ENCODE measurements at regions of chr12 and their contacts with region 1.

Region 1: DNA sequence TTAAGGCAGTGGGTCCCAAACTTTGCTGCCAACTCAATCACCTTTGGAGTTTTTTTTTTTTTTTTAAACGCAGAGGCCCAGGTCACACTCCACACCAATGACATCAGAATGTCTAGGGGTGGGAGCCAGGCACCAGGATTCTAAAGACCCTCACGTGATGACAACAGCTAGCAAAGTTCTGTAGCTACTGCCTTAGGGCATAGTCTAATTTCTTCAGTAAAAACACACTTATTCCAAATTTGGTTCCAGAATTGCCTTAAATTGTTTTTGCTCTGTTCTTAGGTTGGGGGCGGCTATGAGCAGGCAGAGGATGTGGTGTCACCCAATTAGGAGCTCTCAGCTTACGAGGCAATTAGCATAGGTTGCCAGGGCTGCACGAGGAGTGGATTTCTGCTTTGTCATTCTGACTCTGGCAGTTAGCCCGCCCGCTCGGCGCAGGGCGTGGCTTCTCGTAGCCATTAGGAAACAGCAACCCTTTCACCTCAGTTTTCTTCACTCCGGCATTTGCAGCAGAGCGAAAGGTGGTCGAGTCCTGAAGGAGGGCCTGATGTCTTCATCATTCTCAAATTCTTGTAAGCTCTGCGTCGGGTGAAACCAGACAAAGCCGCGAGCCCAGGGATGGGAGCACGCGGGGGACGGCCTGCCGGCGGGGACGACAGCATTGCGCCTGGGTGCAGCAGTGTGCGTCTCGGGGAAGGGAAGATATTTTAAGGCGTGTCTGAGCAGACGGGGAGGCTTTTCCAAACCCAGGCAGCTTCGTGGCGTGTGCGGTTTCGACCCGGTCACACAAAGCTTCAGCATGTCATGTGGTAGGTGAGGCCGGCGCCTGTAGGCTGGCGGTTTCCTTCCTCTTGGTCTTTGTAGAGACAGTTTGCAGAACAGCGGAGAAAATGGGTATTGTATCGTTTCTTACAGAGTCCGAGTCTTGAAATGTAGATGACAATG is 16.7 kb upstream of the EID3 start:
- DNase-seq: peak; percentile 99
- H3K4me3 Mint-ChIP-seq: peak overlapping the region; percentile 98
- H3K27ac Mint-ChIP-seq: peak overlapping the region; percentile 100
- H3K4me1 Mint-ChIP-seq: peaks cover 14% of the 10 kb centered on the region
- H3K27me3 Mint-ChIP-seq: no peaks in the 10 kb centered on the region
- CTCF ChIP-seq: no peak

Region 2: GRCh38 chr12:103930034-103930786 is 356.6 kb before region 1 on chr12 and contains the start of gene HSP90B1:
- CTCF ChIA-PET with region 1: no interaction called
- POLR2A ChIA-PET with region 1: interaction called, 12 read pairs
- intact Hi-C with region 1: no loop called
- DNase-seq: peak; percentile 100
- H3K4me3 Mint-ChIP-seq: peak within 1 kb of the TSS; percentile 75
- H3K27ac Mint-ChIP-seq: peak within 1 kb of the TSS; percentile 58
- H3K4me1 Mint-ChIP-seq: peaks cover 23% of the 10 kb centered on the region
- H3K27me3 Mint-ChIP-seq: no peaks in the 10 kb centered on the region
- CTCF ChIP-seq: no peak
- total RNA-seq, gene HSP90B1: 1,052 and 1,334 TPM in 2 replicates

Region 3: GRCh38 chr12:104177663-104178501 is 108.9 kb before region 1 on chr12:
- CTCF ChIA-PET with region 1: interaction called, 8 read pairs
- POLR2A ChIA-PET with region 1: interaction called, 32 read pairs
- intact Hi-C with region 1: no loop called
- DNase-seq: peak; percentile 96
- H3K4me3 Mint-ChIP-seq: peak overlapping the region; percentile 52
- H3K27ac Mint-ChIP-seq: peak overlapping the region; percentile 89
- H3K4me1 Mint-ChIP-seq: peaks cover 50% of the 10 kb centered on the region
- H3K27me3 Mint-ChIP-seq: no peaks in the 10 kb centered on the region
- CTCF ChIP-seq: peak; percentile 56

Region 4: GRCh38 chr12:104215638-104216297 is 71.0 kb before region 1 on chr12 and contains the start of gene TXNRD1:
- CTCF ChIA-PET with region 1: interaction called, 19 read pairs
- POLR2A ChIA-PET with region 1: interaction called, 417 read pairs
- intact Hi-C with region 1: loop called (anchors 1 kb)
- DNase-seq: no peak
- H3K4me3 Mint-ChIP-seq: no peak within 1 kb of the TSS
- H3K27ac Mint-ChIP-seq: peak within 1 kb of the TSS; percentile 6
- H3K4me1 Mint-ChIP-seq: peaks cover 20% of the 10 kb centered on the region
- H3K27me3 Mint-ChIP-seq: no peaks in the 10 kb centered on the region
- CTCF ChIP-seq: no peak
- total RNA-seq, gene TXNRD1: 64.0 and 82.8 TPM in 2 replicates

Region 5: GRCh38 chr12:104263580-104264358 is 23.0 kb before region 1 on chr12:
- CTCF ChIA-PET with region 1: interaction called, 8 read pairs
- POLR2A ChIA-PET with region 1: interaction called, 89 read pairs
- intact Hi-C with region 1: no loop called
- DNase-seq: peak; percentile 77
- H3K4me3 Mint-ChIP-seq: no peak overlapping the region
- H3K27ac Mint-ChIP-seq: peak overlapping the region; percentile 95
- H3K4me1 Mint-ChIP-seq: peaks cover 18% of the 10 kb centered on the region
- H3K27me3 Mint-ChIP-seq: no peaks in the 10 kb centered on the region
- CTCF ChIP-seq: no peak

Region 6: DNA sequence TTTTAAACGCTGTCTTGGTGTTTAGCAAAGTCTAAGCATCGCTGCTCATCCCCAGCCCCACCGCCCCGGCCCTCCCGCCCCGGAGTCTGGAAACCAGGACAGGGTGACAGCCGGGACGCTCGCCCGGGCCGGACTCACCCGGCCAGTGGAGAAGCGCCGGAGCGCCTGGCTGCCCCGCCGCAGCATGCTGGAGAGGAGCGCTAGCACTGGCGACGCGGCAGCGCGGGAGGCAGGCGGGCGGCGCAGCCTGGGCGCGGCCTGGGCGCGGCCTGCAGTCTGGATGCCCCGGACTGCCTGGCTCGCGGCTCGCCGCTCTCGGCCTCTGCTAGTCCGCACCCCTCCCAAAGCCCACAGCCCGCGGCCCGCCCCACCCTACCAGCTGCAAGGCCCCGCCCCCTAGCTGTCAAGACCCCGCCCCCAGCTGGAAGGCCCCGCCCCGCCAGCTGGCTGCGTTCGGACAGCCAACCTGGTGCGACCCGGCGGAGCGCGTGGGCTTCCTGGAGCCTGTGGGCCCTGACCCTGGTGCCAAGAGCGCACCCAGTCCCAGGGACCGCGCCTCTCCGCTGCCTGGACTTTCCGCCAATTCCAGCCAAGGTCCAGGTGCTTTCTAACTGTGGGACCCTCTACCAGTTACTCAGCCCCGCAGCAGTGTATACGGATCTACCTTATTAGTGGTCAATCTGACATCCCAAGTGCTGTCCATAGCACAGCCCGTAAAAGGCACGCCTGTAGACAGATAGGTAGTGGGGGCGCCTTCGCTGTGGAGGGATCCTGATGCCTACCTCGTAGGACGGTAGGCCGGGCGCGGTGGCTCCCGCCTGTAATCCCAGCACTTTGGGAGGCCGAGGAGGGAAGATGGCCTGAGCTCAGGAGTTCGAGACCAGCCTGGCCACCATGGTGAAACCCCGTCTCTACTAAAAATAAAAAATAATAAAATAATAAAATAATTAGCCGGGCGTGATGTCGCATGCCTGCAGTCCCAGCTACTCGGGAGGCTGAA is 797.7 kb after region 1 on chr12 and contains the start of gene ALDH1L2:
- CTCF ChIA-PET with region 1: no interaction called
- POLR2A ChIA-PET with region 1: interaction called, 10 read pairs
- intact Hi-C with region 1: no loop called
- DNase-seq: peak; percentile 85
- H3K4me3 Mint-ChIP-seq: peak within 1 kb of the TSS; percentile 92
- H3K27ac Mint-ChIP-seq: peak within 1 kb of the TSS; percentile 97
- H3K4me1 Mint-ChIP-seq: peaks cover 23% of the 10 kb centered on the region
- H3K27me3 Mint-ChIP-seq: no peaks in the 10 kb centered on the region
- CTCF ChIP-seq: no peak
- total RNA-seq, gene ALDH1L2: 165 TPM in 2 replicates